ENCODE measurements at regions of chr14 and their contacts with region 1.

Region 1: GRCh38 chr14:68535404-68536017 is 257.4 kb downstream of the ZFP36L1 start:
- DNase-seq: no peak
- ATAC-seq: no peak

Region 2: DNA sequence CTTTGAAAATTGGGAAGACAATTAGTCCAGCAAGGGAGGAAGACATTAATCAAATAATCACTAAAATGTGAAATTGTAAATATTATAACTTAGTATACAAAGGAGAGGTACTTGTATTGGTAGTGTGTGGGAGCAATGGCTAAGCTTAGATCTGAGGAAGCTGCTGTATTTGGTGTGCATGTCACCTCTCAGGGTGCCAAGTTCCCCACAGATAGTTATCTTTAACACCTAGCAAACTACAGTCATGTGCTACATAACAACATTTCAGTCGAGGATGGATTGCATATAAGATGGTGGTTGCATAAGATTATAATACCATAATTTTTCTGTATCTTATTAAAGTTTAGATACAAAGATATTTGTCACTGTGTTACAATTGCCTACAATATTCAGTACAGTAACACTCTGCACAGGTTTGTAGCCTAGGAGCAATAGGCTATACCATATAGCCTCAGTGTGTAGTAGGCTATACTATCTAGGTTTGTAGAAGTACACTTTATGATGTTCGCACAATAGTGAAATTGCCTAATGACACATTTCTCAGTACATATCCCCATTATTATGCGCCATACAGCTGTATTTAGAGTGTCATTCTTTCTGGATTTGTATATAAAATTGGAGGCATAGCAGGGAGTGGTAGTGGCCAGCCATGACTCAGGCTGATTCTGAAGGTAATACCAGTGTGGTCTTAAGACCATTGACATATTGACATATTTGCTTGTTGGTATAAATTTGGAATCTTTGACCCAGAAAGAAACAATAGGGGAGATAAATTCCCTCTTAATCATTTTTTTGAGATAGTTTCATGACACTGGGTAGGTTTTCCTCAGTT is 660.1 kb before region 1 on chr14:
- intact Hi-C with region 1: no loop called
- DNase-seq: no peak
- ATAC-seq: no peak

Region 3: DNA sequence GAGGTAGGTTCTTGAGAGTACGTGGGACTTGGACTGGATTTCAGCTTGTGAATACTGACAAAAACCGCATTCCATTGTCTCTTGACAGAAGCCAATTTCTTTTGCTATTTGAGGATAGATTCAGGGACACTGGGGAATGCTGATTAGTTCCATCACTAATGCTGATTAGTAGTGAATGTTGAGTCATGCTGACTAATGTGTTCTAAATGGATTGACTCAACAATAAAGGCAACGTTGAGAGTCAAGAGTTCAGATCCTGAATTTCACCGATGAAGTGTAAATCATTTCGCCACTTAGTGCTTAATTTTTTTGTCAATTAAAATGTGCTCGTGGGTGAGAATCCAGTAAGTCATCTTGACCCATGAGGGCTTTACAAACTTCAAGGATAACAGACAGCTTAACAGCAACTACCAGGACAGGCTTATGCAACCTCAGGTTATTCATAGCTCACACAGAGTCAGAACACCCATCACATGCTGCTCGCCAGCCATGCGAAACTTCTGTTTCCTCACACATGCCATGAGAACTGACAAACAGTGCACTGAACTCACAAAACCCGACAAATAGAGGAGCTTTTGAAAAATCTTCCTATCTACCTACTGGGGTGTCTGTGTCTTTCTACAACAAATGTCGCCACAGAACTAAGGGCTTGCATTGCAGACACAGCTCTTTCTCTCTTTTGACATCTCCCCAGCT is 59.2 kb before region 1 on chr14:
- intact Hi-C with region 1: no loop called
- DNase-seq: peak; percentile 70
- ATAC-seq: peak; percentile 92

Region 4: GRCh38 chr14:68598621-68599447 is 63.3 kb after region 1 on chr14:
- intact Hi-C with region 1: no loop called
- DNase-seq: peak; percentile 85
- ATAC-seq: peak; percentile 90

Region 5: DNA sequence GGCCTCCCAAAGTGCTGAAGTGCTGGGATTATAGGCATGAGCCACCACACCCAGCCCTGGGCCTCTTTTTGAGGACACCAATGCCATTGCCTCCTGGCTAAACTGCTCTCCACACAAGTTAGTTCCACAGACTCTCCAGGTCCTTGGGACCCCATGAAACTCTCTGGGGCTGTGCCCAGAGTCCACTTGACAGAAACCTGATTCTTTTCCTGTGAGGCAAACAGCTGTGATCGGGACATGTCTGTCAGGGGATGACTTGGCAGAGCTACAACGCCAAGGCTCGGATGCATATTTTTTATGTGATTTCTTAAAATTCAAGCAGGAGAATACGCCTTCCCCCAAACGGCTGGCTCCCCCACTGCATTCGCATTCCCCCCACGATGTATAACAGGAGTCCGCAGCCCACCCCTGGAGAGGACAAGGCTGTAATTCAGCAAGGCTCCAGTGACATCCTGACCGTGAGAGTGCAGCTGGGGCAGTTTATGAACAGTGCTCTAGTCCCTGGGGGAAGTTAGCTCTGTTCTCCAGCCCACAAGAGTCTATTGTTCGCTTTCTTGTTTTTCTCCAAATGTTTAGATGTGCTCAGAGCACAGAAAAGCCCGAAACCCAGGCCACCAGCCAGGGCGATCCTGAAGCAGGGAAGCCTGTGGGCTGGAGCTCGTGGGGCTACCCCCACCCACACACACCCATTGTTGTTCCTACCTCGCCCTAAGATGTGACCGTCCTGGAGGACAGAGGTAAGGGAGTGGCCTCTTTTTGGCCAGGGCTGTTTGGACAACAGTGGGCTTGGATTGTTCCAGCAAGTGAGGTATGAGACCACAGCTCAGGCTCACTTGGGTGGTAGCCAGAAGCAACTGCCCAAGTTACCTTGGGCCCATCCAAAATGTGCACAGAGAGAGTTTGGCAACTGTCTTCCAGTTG is 97.8 kb after region 1 on chr14:
- intact Hi-C with region 1: loop called (anchors 5 kb)
- DNase-seq: no peak
- ATAC-seq: peak; percentile 81